Mammary epithelial cell (primary cell): ENCODE measurements at regions of chr1 and their contacts with region 1.

Region 1: DNA sequence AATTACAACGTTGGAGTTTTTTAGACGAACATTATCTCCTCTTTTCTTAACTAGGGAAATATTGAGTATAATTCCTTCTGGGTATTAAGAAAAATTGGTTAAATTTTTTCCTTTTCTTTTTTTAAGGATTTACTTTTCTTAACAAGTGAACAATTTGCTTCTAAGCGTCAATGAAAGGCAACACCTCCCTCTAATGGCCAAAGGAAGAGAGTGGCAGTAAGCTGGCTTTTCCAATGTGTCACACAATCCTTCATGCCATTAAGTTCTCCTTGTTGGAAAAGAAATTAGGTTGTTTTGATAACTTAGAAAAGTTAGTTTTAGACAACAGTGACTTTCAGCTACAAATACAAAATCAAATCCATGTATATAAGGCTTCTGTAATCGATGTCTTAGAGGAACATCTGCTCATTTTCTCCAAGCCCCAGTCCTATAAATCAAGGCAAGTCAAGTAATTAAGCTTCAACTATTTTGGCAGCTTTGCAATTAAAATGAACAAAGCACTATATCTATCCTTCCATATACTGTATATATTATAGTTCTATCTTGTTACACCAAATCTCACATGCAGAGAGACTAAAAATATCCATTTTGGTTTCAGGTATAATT is 62.8 kb downstream of the EDEM3 start:
- DNase-seq: peak; percentile 41
- H3K4me3 ChIP-seq: no peak overlapping the region
- H3K27ac ChIP-seq: no peak overlapping the region
- H3K4me1 ChIP-seq: no peaks in the 10 kb centered on the region
- H3K27me3 ChIP-seq: no peaks in the 10 kb centered on the region
- CTCF ChIP-seq: peak; percentile 80 to 86

Region 2: GRCh38 chr1:183609313-183609712 is 1082.5 kb before region 1 on chr1:
- CTCF ChIA-PET with region 1: interaction called, 12 read pairs
- dilution Hi-C with region 1: no loop called
- in situ Hi-C with region 1: no loop called
- intact Hi-C with region 1: no loop called
- DNase-seq: peak; percentile 69
- H3K4me3 ChIP-seq: no peak overlapping the region
- H3K27ac ChIP-seq: peak overlapping the region; percentile 83
- H3K4me1 ChIP-seq: peaks cover 35% of the 10 kb centered on the region
- H3K27me3 ChIP-seq: no peaks in the 10 kb centered on the region
- CTCF ChIP-seq: peak; percentile 24 to 48

Region 3: DNA sequence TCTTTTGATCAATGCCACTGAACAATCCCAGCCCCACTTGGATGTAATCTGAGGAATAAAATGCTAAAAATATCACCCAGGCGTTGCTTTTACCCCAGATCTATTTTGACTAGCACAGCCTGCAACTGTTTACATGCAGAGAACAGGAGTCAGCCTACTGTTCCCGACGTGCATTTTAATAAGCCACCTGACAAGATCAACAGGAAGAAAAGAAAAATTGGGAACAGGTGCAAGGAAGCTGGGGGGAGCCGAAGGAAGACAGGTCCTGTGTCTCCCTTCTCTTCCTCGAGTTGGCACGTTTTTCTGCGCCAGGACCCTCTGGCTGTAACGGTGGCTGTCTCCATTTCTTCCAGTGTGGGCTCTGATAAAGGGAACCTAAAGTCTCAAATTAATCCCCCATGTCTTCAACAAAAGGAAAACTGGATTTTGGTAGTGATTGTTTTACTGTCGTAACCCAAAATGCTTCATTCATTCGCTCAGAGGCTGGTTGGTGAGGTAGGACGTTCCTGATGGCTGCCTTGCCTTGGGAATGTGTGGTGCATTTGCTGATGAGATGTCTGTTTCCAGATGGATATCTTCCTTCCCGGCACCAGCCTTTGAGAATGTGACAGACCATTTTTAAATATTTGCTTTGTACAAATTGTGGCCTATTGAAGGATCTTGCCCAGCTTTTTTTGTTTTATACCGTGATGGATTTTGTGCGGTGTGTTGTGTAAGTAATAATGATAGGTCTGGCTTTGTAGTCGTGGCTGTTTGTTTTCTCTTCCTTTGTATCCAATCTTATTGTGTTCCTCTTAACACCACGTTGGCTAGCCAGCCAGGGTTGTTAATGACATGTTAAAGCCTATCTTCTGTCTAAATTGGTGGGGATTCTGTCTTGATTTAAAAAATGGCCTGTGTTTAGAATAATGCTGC is 187.5 kb before region 1 on chr1:
- CTCF ChIA-PET with region 1: no interaction called
- dilution Hi-C with region 1: loop called (anchors 10 kb)
- in situ Hi-C with region 1: no loop called
- intact Hi-C with region 1: no loop called
- DNase-seq: no peak
- H3K4me3 ChIP-seq: no peak overlapping the region
- H3K27ac ChIP-seq: no peak overlapping the region
- H3K4me1 ChIP-seq: no peaks in the 10 kb centered on the region
- H3K27me3 ChIP-seq: no peaks in the 10 kb centered on the region
- CTCF ChIP-seq: no peak

Region 4: DNA sequence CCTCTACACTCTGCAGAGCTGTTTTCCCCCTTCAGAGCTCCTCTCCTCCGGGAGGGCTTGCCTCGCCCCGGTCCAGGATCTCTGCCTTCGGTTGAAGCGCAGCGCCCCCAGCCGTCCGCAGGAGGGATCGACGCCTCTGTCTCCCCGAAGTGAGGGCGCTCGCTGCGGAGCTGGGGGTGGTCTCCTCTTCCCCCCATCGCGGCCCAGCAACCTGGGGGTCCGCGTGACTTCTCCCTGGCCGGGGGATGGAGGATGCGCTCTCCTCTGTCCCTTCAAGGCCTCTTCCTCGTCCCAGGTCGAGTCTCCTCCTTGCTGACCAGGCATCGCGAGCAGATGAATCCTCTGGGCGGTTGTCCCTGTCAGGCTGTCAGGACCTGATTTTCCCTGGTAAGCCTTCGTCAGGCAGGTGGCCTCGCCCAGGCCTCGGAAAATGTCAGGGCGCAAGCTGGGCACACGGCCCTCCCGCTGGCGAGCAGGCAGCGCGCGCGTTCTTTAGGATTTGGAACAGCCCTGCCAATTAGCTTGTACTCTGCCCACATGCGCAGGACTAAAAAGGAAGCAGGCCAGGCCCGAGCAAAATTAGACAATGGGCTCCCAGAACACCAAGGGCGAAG is 27.7 kb before region 1 on chr1:
- CTCF ChIA-PET with region 1: no interaction called
- dilution Hi-C with region 1: no loop called
- in situ Hi-C with region 1: no loop called
- intact Hi-C with region 1: no loop called
- DNase-seq: peak; percentile 43
- H3K4me3 ChIP-seq: peak overlapping the region; percentile 40 to 51 (median 48)
- H3K27ac ChIP-seq: no peak overlapping the region
- H3K4me1 ChIP-seq: peaks cover 10% of the 10 kb centered on the region
- H3K27me3 ChIP-seq: no peaks in the 10 kb centered on the region
- CTCF ChIP-seq: peak; percentile 77 to 97